Mammary epithelial cell (primary cell): ENCODE measurements at regions of chr2 and their contacts with region 1.

Region 1: GRCh38 chr2:112958428-112959108 is 19.2 kb upstream of the IL36G start:
- DNase-seq: peak; percentile 53
- H3K4me3 ChIP-seq: no peak overlapping the region
- H3K27ac ChIP-seq: no peak overlapping the region
- H3K4me1 ChIP-seq: peaks cover 13% of the 10 kb centered on the region
- H3K27me3 ChIP-seq: no peaks in the 10 kb centered on the region
- CTCF ChIP-seq: peak; percentile 86 to 92

Region 2: GRCh38 chr2:112597537-112598322 is 360.8 kb before region 1 on chr2:
- CTCF ChIA-PET with region 1: no interaction called
- dilution Hi-C with region 1: no loop called
- in situ Hi-C with region 1: loop called in 1 of 2 experiments (anchors 10 kb)
- intact Hi-C with region 1: loop called (anchors 5 kb)
- DNase-seq: no peak
- H3K4me3 ChIP-seq: no peak overlapping the region
- H3K27ac ChIP-seq: no peak overlapping the region
- H3K4me1 ChIP-seq: peaks cover 22% of the 10 kb centered on the region
- H3K27me3 ChIP-seq: no peaks in the 10 kb centered on the region
- CTCF ChIP-seq: no peak

Region 3: GRCh38 chr2:112606488-112606902 is 352.1 kb before region 1 on chr2:
- CTCF ChIA-PET with region 1: no interaction called
- dilution Hi-C with region 1: no loop called
- in situ Hi-C with region 1: no loop called
- intact Hi-C with region 1: loop called (anchors 5 kb)
- DNase-seq: no peak
- H3K4me3 ChIP-seq: no peak overlapping the region
- H3K27ac ChIP-seq: no peak overlapping the region
- H3K4me1 ChIP-seq: peaks cover 5% of the 10 kb centered on the region
- H3K27me3 ChIP-seq: no peaks in the 10 kb centered on the region
- CTCF ChIP-seq: no peak

Region 4: GRCh38 chr2:112749755-112750559 is 208.6 kb before region 1 on chr2:
- CTCF ChIA-PET with region 1: no interaction called
- dilution Hi-C with region 1: no loop called
- in situ Hi-C with region 1: no loop called
- intact Hi-C with region 1: loop called (anchors 1 kb)
- DNase-seq: peak; percentile 60
- H3K4me3 ChIP-seq: no peak overlapping the region
- H3K27ac ChIP-seq: peak overlapping the region; percentile 28
- H3K4me1 ChIP-seq: peaks cover 6% of the 10 kb centered on the region
- H3K27me3 ChIP-seq: no peaks in the 10 kb centered on the region
- CTCF ChIP-seq: peak; percentile 97 to 99

Region 5: GRCh38 chr2:112884869-112885505 is 73.6 kb before region 1 on chr2:
- CTCF ChIA-PET with region 1: no interaction called
- dilution Hi-C with region 1: no loop called
- in situ Hi-C with region 1: no loop called
- intact Hi-C with region 1: loop called (anchors 2 kb)
- DNase-seq: peak; percentile 44
- H3K4me3 ChIP-seq: no peak overlapping the region
- H3K27ac ChIP-seq: no peak overlapping the region
- H3K4me1 ChIP-seq: peaks cover 43% of the 10 kb centered on the region
- H3K27me3 ChIP-seq: no peaks in the 10 kb centered on the region
- CTCF ChIP-seq: peak; percentile 79 to 93

Region 6: GRCh38 chr2:113069645-113070402 is 111.3 kb after region 1 on chr2:
- CTCF ChIA-PET with region 1: no interaction called
- dilution Hi-C with region 1: no loop called
- in situ Hi-C with region 1: no loop called
- intact Hi-C with region 1: loop called (anchors 5 kb)
- DNase-seq: no peak
- H3K4me3 ChIP-seq: no peak overlapping the region
- H3K27ac ChIP-seq: peak overlapping the region; percentile 51
- H3K4me1 ChIP-seq: peaks cover 60% of the 10 kb centered on the region
- H3K27me3 ChIP-seq: no peaks in the 10 kb centered on the region
- CTCF ChIP-seq: no peak